Dorsolateral prefrontal cortex (tissue), 120 donors: ENCODE measurements at regions of chr14 and their contacts with region 1.

Region 1: DNA sequence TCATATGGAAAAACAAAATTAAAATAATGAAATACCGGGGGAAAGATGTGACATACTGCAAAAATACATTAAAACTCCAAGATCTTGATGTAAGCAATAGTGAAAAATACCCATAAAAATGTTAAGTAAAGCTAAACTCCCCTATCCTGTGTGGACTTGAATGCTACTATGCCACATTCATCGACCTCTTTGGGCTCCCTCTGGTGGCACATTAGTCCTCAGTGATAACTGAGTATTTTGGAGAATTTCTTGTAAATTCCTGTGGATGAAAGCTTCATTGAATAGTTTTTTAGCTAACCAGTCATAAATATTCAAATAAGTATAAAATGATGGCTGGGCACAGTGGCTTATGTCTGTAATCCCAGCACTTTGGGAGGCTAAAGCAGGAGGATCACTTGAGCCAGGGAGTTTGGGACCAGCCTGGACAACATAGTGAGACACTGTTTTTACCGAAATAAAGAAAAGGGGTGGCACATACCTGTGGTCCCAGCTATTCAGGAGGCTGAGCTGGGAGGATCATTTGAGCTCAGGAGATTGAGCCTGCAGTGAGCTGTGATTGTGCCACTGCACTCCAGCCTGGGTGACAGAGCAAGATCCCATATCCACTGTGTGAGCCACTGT is 42.4 kb upstream of the SGPP1 start:
- DNase-seq: peak in 5 of 10 donors; percentile 14 to 70 (median 56)
- H3K4me3 ChIP-seq: no peak overlapping the region
- H3K27ac ChIP-seq: no peak overlapping the region
- H3K27me3 ChIP-seq: no peaks in the 10 kb centered on the region
- CTCF ChIP-seq: peak; percentile 29 to 83 (median 68)

Region 2: DNA sequence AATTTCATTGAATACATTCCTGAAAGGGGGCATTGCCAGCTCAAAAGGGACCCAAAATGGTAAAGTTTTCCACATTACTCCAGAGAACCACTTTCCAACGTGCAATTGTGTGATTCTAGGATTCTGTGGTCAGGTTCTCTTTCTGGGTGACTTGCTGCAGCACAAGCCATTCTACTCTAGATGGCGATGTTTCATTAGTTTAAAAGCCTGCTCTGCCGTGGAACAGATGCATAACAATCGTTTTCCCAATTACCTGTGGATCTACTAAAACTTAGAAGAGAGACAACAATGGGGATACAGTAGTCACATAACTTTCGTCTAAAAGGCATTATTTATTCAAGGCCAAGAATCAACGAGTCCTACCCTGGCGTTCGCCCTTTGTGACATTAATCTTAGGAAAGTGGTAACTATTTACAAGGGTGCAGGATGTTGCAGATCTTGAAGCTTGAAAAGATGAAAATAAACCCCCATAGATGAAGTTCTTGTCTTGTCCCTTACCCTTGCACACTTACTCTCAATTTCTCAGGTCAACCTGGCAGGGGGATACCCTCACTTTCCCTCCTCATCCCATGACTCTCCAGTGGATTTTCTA is 1607.2 kb before region 1 on chr14:
- intact Hi-C with region 1: loop called (anchors 10 kb)
- DNase-seq: peak in 1 of 10 donors; percentile 20
- H3K4me3 ChIP-seq: no peak overlapping the region
- H3K27ac ChIP-seq: no peak overlapping the region
- H3K27me3 ChIP-seq: peaks cover 0 to 19% (median 0%) of the 10 kb centered on the region in 45 donors
- CTCF ChIP-seq: peak; percentile 23 to 86 (median 69)

Region 3: GRCh38 chr14:63388763-63389431 is 381.4 kb before region 1 on chr14:
- intact Hi-C with region 1: loop called in 1 of 2 experiments (anchors 10 kb)
- DNase-seq: peak in 8 of 10 donors; percentile 31 to 73 (median 53)
- H3K4me3 ChIP-seq: no peak overlapping the region
- H3K27ac ChIP-seq: no peak overlapping the region
- H3K27me3 ChIP-seq: no peaks in the 10 kb centered on the region
- CTCF ChIP-seq: peak in 55 of 56 donors; percentile 51 to 94 (median 77)

Region 4: DNA sequence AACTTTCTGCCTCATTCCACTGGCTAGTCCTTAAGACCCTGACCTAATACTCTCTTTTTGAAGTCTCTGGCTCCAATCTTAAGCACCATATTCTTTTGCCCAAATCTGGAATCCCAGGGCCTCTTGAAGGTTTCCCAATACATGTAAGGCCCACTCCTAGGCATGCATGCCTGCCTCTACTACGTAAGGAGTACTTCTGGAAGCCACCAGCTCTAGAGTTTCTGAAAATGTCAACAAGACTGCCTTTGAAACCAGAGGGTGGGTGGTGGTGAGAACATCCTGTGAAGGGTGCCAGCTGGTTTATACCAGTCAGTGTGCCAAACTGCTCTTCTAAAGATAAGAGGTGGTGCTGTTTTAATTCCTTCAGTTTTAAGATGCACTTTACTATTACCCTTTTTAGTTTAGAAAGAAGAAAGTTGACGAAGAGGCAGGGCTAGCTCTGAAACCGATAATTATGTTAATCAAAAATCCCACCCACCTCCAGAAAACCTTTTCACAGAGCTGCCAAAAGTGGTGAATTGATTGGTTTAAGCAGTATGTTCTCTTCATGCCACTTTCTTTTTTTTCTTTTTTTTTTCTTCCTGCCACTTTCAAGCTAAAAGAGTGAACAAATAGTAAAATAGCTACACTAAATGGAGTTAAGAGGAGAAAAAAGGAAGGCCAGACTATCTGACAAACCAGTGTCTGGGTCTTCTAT is 119.9 kb before region 1 on chr14:
- intact Hi-C with region 1: loop called in 1 of 2 experiments (anchors 10 kb)
- DNase-seq: peak in 3 of 10 donors; percentile 45 to 65 (median 51)
- H3K4me3 ChIP-seq: no peak overlapping the region
- H3K27ac ChIP-seq: peak overlapping the region in 24 of 59 donors; percentile 3 to 84 (median 44)
- H3K27me3 ChIP-seq: no peaks in the 10 kb centered on the region
- CTCF ChIP-seq: no peak

Region 5: GRCh38 chr14:63727774-63728728 is 42.2 kb before region 1 on chr14 and contains the start of gene SGPP1:
- intact Hi-C with region 1: loop called (anchors 2 kb)
- DNase-seq: peak; percentile 41 to 79 (median 61)
- H3K4me3 ChIP-seq: peak within 1 kb of the TSS; percentile 70 to 98 (median 91)
- H3K27ac ChIP-seq: peak within 1 kb of the TSS; percentile 63 to 97 (median 90)
- H3K27me3 ChIP-seq: no peaks in the 10 kb centered on the region
- CTCF ChIP-seq: peak in 47 of 56 donors; percentile 13 to 62 (median 41)
- total RNA-seq, gene SGPP1: 16.0 to 26.2 (median 20.9) TPM